ENCODE measurements at regions of chr4 and their contacts with region 1.

Region 1: DNA sequence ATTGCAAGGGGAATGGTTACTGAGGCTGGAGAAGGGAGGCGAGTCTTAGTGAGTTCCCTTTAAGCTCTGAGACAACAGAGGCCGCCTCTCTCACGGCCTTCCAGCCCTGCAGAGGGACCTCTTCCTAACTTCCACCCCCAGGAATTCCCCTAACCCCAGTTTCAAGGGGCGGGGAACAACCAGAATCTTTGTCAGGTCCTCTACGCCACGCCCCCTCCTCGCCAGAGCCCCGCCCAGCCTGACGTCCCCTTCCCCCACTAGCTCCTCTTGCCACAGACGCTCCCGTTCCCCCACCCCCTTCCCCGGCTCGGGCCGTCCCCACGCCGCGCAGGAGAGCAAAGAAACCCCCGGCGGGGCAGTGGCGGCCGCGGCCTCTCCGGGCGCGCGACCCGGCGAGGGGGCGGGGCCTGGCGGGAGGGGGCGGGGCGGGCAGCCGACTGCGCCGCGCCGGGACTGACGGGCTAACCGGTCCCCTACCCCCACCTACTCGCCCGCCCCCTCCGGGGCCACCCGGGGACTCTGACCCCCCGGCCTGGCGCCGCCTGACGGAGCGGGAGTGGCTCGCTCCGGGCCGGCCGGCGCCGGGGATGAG is 12.3 kb upstream of the TMEM156 start:
- DNase-seq: peak; percentile 91
- CTCF ChIP-seq: peak; percentile 2

Region 2: GRCh38 chr4:39054497-39054896 is 10.0 kb after region 1 on chr4:
- CTCF ChIA-PET with region 1: interaction called, 11 read pairs
- POLR2A ChIA-PET with region 1: no interaction called
- DNase-seq: no peak
- CTCF ChIP-seq: no peak

Region 3: DNA sequence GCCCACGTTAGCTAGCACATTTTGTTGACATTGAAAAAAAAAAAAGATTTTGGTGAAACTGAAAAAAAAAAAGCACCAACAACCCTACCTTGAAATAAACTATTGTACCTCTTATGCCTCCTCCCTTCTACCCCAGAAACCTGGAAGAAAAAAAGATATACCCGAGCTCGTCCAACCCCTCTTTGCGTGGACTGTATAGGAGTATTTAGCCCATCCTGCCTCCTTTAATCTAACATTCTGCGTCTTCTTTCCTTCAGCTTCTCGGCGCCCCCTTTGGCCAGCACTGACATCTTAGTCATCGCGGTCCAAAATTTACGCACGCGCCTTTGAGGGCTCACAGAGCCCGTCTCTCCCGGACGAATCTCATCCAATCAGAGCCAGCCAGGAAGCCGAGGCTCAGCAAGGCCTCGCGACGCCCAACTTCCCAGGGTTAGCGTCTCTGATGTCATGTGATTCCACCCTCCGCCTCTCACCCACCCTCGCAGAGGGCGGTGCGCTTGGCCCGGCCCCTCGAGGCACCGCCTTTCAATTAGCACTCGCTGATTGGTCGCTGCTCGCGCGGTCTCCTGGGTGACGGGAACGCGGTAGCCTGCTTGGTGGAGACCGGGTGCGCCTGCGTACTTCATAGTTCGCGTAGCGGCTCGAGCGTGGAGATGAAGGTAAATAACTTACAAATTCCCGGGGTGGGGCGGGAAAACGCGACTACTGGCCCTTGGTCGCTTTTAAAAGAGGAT is 137.6 kb after region 1 on chr4 and contains the start of gene WDR19:
- CTCF ChIA-PET with region 1: no interaction called
- POLR2A ChIA-PET with region 1: no interaction called
- DNase-seq: peak; percentile 97
- CTCF ChIP-seq: peak; percentile 52